ENCODE measurements at regions of chr15 and their contacts with region 1.

Region 1: DNA sequence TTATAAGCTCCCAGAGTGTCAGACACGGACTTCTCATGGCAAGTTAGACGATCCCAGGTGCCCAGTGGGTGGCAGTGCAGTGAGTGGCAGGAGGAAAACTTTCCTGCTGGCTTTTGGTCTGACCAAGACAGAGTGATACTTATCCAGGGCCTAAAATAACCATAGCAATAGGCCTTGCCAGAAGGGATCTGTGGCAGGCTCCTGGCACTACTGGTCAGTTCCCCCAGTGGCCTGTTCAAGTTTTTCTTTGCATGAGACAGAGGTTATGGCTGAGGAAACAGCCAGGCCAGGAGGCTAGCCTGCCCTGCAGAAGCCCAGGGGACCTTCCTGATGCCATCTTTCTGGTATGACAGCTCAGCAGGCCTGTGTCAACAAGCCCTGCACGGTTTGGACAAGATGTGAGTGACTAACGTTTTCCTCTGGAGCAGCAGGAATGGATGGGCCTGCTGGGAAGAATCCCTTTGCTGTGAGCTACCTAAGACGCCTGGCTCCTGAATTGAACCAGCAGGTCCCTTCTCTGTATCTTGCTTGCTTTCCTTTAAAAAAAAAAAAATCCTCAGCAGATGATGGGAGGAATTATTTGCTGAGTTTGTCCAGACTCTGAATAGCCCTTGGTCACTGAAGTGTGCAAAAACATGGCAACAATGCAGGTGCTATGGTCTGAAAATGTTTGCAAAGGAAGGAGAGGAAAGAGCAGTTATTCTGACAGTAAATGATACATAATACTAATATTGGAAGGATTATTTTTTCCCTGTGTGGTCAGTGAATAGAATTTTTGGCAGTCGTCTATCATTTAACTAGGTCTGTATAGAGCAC is 18.0 kb downstream of the SCG5 start:
- DNase-seq: no peak
- ATAC-seq: peak in 1 of 4 donors; percentile 15
- H3K4me3 ChIP-seq: no peak overlapping the region
- H3K27ac ChIP-seq: no peak overlapping the region
- H3K4me1 ChIP-seq: peaks cover 0 to 2% (median 0%) of the 10 kb centered on the region in 4 donors
- H3K27me3 ChIP-seq: no peaks in the 10 kb centered on the region
- CTCF ChIP-seq: no peak
- POLR2A ChIP-seq: no peak

Region 2: DNA sequence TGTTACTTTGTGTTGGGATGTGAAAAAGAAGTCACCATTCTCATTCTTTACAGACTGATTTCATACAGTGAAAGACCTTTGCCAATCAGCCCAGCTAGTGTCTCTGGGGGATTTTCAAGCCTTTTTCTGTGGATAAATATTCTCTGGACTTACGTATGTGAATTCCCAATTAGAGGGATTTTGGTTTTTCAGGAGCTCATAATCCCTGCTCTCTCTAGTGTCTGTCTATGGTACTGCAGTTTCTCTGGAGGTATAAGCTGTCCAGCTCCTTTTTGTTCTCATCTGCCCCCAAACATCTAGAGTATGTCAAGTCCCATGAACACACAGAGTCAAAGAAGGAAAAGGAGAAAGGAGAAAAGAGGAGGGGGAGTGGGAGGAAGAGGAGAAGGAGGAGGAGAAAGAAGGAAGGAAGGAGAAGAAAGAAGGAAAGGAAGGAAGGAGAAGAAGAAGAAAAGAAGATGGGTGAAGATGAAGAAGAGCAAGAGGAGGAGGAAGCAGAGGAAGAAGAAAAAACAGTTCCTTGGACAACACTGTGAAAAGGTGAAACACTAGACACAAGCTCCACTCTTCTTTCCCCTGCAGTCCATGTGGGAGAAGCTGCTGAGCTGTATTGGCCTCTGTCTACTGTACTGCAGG is 276.9 kb after region 1 on chr15:
- intact Hi-C with region 1: loop called in 1 of 2 experiments (anchors 10 kb)
- DNase-seq: no peak
- ATAC-seq: peak; percentile 64 to 74 (median 69)
- H3K4me3 ChIP-seq: no peak overlapping the region
- H3K27ac ChIP-seq: no peak overlapping the region
- H3K4me1 ChIP-seq: no peaks in the 10 kb centered on the region
- H3K27me3 ChIP-seq: peaks cover 0 to 6% of the 10 kb centered on the region in 2 donors
- CTCF ChIP-seq: peak; percentile 47 to 76 (median 64)
- POLR2A ChIP-seq: no peak

Region 3: GRCh38 chr15:33169625-33170024 is 510.1 kb after region 1 on chr15:
- intact Hi-C with region 1: no loop called
- DNase-seq: no peak
- ATAC-seq: no peak
- H3K4me3 ChIP-seq: no peak overlapping the region
- H3K27ac ChIP-seq: no peak overlapping the region
- H3K4me1 ChIP-seq: no peaks in the 10 kb centered on the region
- H3K27me3 ChIP-seq: no peaks in the 10 kb centered on the region
- CTCF ChIP-seq: no peak
- POLR2A ChIP-seq: no peak